ENCODE measurements at regions of chr7 and their contacts with region 1.

Region 1: GRCh38 chr7:39732837-39733804 is 109.7 kb downstream of the RALA start:
- DNase-seq: peak; percentile 98
- H3K4me3 ChIP-seq: peak overlapping the region; percentile 66
- H3K27ac ChIP-seq: peak overlapping the region; percentile 87
- H3K27me3 ChIP-seq: no peaks in the 10 kb centered on the region
- CTCF ChIP-seq: no peak

Region 2: DNA sequence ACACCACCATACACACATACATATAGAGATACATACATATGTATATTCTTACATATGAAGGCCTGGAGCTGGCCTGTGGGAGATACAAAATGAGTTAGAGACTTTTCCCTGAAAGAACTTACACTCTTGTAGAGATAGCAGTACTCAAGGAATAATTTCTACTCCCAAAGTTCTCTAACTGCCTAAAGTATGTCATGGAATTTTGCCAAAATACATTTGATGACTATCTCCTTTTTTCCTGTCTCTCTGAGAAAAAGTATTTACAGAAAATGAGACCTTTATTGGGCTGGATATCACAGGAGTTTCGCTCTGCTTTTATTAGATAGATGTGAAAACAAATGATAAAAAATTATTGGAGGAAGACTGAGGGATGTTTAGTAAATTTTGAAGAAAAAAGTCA is 535.3 kb before region 1 on chr7:
- in situ Hi-C with region 1: no loop called
- DNase-seq: no peak
- H3K4me3 ChIP-seq: no peak overlapping the region
- H3K27ac ChIP-seq: no peak overlapping the region
- H3K27me3 ChIP-seq: no peaks in the 10 kb centered on the region
- CTCF ChIP-seq: no peak

Region 3: GRCh38 chr7:39336442-39336841 is 396.7 kb before region 1 on chr7:
- in situ Hi-C with region 1: no loop called
- DNase-seq: peak; percentile 56
- H3K4me3 ChIP-seq: no peak overlapping the region
- H3K27ac ChIP-seq: no peak overlapping the region
- H3K27me3 ChIP-seq: no peaks in the 10 kb centered on the region
- CTCF ChIP-seq: no peak

Region 4: DNA sequence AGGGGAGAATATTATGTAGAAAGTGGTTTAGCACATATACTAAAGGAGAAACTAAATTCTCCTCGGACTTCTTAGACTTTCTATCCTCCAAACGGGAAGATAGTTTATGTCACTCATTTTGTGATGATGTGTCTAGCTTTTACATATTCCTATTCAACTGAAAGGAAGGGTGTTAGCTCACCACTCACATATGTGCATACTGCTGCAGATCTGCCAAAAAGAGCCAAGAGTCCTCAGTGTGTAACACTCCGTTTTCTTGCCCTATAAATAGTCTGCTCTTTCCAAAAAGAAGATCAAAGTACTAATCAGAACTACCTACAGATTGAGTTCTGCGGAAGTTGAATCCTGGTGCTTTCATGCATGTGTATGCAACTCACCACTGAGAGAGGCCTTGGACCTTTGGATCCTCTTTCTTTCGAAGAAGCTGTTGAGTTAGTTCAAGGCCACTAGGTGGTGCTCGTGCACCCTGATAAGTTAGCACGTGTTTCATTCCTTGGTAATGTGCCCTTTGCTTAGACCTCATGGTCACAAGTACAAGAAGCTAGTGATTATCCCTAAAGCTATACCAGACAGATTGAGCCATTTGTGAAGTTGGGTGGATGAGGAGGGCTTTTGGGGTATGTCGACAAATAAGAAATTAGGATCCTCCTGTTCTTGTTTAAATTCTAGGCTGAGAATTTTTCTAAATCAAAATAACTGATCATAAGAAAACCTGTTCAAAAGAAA is 152.8 kb before region 1 on chr7:
- in situ Hi-C with region 1: loop called (anchors 25 kb)
- DNase-seq: peak; percentile 77
- H3K4me3 ChIP-seq: no peak overlapping the region
- H3K27ac ChIP-seq: no peak overlapping the region
- H3K27me3 ChIP-seq: no peaks in the 10 kb centered on the region
- CTCF ChIP-seq: peak; percentile 82